Activated naive CD4-positive, alpha-beta T cell treated with anti-CD3 and anti-CD28 coated beads for 36 hours (primary cell): ENCODE measurements at regions of chr2 and their contacts with region 1.

Region 1: DNA sequence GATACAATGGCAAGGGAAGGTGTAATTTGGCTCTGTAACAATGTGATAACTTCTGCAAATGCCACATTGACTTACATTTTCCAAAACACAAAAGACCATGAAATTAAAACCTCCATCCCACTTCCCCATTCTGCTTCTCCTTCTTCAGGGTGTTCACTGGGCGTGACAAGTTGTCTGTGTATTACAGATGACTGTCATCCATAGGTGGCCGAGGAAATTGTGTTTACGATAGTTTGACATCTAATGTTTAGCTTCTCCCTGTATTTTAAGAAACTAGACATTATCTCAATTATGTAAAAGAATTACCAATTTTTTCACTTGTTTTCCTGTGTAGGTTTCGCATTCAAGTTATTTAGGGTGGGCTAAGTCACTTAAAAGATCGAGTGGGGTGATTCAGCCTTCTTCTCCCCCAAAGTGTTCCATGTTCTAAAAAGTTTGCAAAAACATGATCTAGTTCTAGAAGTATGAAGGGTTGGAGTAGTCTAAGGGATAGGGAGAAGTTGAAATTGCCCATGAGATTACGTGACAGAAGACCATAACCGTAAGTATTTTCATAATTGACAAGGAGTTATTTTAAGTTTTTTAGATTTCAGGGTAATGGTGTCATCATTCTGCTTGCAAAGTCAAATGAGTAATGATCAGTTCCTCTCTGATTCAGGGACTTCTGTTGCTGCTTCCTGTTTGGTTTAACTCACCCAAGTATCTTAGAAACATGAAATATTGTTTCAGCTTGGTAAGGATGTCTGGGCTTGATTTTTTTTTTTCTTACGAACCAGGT is 25.2 kb upstream of the CYTIP start:
- DNase-seq: peak; percentile 27
- H3K4me3 Mint-ChIP-seq: peak overlapping the region; percentile 64
- H3K27ac Mint-ChIP-seq: peak overlapping the region; percentile 99
- H3K4me1 Mint-ChIP-seq: peaks cover 94% of the 10 kb centered on the region
- H3K27me3 Mint-ChIP-seq: no peaks in the 10 kb centered on the region

Region 2: DNA sequence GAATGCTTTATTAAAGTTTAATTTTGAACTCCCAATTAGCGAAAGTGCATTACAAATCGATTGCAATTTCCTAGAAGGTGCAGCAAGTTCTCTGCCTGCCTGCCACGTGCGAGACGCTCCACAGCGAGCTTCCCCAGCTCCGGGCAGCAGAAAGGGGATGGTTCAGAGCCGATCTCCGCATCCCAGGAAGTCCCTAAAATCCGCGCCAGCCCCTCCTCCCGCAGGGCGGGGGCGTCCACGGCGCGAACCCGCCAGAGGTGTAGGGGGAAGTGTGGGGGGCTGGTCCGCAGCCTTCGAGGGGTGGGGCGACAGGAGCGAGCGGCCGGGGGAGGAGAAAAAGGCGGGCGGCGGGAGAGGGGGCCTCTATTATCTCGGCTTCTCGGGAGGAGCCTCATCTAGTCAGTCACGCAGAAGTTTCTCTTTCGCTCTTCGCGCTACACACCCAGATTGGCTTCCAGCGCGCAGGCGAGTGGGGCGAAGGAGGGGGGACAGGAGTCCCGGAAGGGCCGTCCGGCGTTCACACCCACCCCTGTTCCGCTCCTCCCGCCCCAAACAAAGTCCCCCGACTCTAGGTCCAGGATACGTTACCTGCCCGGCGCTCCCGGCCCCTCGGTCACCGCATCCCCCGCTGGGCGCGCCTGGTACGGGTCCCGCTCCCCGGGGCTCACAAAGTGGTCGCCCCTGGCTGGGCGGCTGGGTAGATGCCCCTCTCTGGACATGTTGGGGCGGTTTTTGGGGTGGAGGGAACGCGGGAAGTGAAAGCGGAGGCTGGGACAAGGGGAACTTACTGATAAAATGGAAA is 1127.5 kb before region 1 on chr2:
- CTCF ChIA-PET with region 1: no interaction called
- intact Hi-C with region 1: loop called (anchors 5 kb)
- DNase-seq: peak; percentile 94
- H3K4me3 Mint-ChIP-seq: peak overlapping the region; percentile 84
- H3K27ac Mint-ChIP-seq: peak overlapping the region; percentile 96
- H3K4me1 Mint-ChIP-seq: peaks cover 50% of the 10 kb centered on the region
- H3K27me3 Mint-ChIP-seq: no peaks in the 10 kb centered on the region

Region 3: DNA sequence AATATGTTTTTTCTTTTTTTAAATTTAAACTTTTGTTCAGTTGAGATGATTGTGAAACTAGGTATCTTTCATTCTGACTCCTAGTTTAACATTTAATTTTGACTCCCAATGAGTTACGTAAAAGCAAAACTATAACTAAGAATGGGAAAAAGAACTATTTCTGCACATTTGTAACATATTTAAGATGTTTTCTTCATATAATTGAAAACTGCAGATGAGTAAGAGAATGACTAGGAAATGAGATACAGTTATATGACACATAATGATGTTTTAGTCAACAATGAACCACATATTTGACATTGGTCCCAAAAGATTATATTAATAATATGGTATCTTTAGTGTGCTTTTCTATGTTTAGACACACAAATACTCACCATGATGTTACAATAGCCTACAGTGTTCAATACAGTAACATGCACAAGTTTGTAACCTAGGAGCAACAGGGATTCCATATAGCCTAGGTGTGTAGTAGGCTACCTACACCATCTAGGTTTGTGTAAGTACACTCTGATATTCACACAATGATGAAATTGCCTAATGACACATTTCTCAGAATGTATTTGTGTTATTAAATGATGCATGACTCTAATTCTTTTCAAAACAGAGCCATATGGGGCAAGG is 156.1 kb before region 1 on chr2:
- CTCF ChIA-PET with region 1: no interaction called
- intact Hi-C with region 1: loop called (anchors 1 kb)
- DNase-seq: peak; percentile 17
- H3K4me3 Mint-ChIP-seq: no peak overlapping the region
- H3K27ac Mint-ChIP-seq: peak overlapping the region; percentile 41
- H3K4me1 Mint-ChIP-seq: peaks cover 49% of the 10 kb centered on the region
- H3K27me3 Mint-ChIP-seq: no peaks in the 10 kb centered on the region

Region 4: GRCh38 chr2:157404363-157404762 is 64.8 kb before region 1 on chr2:
- CTCF ChIA-PET with region 1: no interaction called
- intact Hi-C with region 1: loop called (anchors 1 kb)
- DNase-seq: peak; percentile 80
- H3K4me3 Mint-ChIP-seq: no peak overlapping the region
- H3K27ac Mint-ChIP-seq: peak overlapping the region; percentile 72
- H3K4me1 Mint-ChIP-seq: peaks cover 76% of the 10 kb centered on the region
- H3K27me3 Mint-ChIP-seq: no peaks in the 10 kb centered on the region

Region 5: GRCh38 chr2:157420771-157421323 is 48.3 kb before region 1 on chr2:
- CTCF ChIA-PET with region 1: interaction called, 3 read pairs
- intact Hi-C with region 1: loop called (anchors 1 kb)
- DNase-seq: peak; percentile 66
- H3K4me3 Mint-ChIP-seq: peak overlapping the region; percentile 33
- H3K27ac Mint-ChIP-seq: peak overlapping the region; percentile 95
- H3K4me1 Mint-ChIP-seq: peaks cover 79% of the 10 kb centered on the region
- H3K27me3 Mint-ChIP-seq: no peaks in the 10 kb centered on the region

Region 6: DNA sequence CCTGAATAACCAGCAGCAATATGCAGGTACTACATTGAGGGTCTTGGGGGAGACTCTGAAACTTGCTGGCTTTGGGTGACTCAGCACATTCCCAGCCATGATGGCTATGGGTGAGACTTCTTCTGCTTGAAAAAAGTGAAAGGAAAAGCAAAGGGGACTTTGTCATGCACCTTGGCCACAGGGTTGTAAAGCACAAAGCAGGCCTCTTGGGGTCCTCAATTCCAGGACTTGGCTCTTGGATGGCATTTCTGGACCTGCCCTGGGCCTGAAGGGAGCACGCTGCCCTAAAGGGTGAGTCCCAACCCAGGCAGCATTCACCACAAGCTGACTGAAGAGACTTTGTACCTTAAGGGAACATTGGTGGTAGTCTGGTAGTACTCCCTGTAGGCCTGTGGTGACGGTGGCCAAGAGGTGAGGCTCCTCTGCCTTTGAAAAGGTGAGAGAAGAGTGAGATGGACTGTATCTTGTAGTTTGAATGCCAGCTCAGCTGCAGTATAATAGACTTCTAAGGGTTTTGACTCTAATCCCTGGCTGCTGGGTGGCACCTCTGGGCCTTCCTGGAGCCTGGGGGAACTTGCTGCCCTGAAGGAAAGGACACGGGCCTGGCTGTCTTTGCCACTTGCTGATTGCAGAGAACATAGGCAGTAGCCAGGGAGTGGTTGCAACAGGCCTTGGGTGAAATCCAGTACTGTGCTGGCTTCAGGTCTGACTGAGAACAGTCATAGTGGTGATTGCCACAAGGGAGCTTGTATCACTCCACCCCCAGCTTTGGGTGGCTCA is 11.3 kb after region 1 on chr2:
- CTCF ChIA-PET with region 1: interaction called, 7 read pairs
- intact Hi-C with region 1: loop called (anchors 1 kb)
- DNase-seq: peak; percentile 83
- H3K4me3 Mint-ChIP-seq: peak overlapping the region; percentile 64
- H3K27ac Mint-ChIP-seq: peak overlapping the region; percentile 95
- H3K4me1 Mint-ChIP-seq: peaks cover 85% of the 10 kb centered on the region
- H3K27me3 Mint-ChIP-seq: no peaks in the 10 kb centered on the region

Region 7: DNA sequence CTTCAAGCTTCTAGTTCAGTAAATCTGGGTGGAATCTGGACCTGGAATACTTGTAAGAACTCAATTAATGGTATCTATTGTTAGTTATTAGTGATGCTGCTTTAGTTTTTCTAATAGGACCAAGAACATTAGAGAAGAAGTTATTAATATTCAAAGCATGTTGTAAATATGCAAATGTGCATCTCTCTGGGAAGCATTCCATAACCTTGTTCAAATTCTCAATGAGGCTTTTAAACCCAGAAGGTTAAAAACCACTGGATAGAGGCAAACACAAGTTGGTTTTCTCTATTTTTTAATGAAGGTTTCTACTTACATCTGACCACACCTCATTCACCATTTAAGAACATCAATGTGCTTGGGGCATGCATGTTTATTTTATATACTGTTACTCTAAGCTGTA is 175.7 kb after region 1 on chr2:
- CTCF ChIA-PET with region 1: no interaction called
- intact Hi-C with region 1: no loop called
- DNase-seq: no peak
- H3K4me3 Mint-ChIP-seq: no peak overlapping the region
- H3K27ac Mint-ChIP-seq: no peak overlapping the region
- H3K4me1 Mint-ChIP-seq: no peaks in the 10 kb centered on the region
- H3K27me3 Mint-ChIP-seq: no peaks in the 10 kb centered on the region